Right cardiac atrium (tissue), 5 donors: ENCODE measurements at regions of chr6 and their contacts with region 1.

Region 1: GRCh38 chr6:101393251-101393828 is at the start of gene GRIK2:
- DNase-seq: peak; percentile 39 to 77 (median 72)
- ATAC-seq: peak; percentile 78 to 86
- H3K4me3 ChIP-seq: peak within 1 kb of the TSS; percentile 62
- H3K27ac ChIP-seq: no peak within 1 kb of the TSS
- H3K4me1 ChIP-seq: peaks cover 3% of the 10 kb centered on the region
- H3K27me3 ChIP-seq: no peaks in the 10 kb centered on the region
- total RNA-seq, gene GRIK2: 10.4 to 26.7 (median 16.2) TPM

Region 2: DNA sequence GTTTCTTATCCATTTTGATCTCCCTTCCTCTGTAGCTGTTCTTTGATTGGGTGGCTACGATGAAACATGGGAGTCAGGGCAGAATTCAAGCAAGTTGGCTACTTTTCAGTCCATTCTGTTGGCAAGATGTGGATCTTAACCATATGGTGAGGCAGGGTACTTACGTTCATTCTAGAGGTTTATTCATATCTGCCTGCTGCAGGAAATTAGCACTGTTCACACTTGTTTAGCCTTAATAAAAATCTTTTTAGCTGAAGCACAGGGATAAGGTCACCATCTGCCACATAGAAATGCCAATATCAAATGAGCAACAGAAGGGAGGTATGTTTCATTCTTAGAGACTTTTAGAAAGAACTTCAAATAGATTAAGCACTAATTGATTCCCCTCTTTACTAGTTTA is 84.1 kb after region 1 on chr6:
- intact Hi-C with region 1: no loop called
- DNase-seq: no peak
- ATAC-seq: no peak
- H3K4me3 ChIP-seq: no peak overlapping the region
- H3K27ac ChIP-seq: no peak overlapping the region
- H3K4me1 ChIP-seq: no peaks in the 10 kb centered on the region
- H3K27me3 ChIP-seq: no peaks in the 10 kb centered on the region

Region 3: DNA sequence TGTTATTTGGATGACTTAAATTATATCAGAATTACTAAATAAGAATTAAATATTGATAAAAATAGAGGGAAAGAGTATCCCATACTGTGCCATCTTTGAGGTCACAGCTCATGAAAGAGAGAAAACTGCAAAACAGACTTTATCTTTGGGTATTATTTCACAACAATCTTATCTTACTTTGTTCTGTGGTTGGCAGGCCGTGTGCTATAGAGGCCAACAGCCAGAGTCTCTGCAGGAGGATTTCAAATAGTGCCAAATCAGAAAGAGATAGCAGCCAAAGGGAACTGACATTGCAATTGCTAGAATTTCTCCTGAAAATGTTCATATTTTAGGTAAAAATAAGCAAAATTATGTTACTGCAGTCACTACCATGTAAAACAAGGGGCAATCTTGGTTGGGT is 354.4 kb after region 1 on chr6:
- intact Hi-C with region 1: loop called in 1 of 4 experiments (anchors 10 kb)
- DNase-seq: peak in 2 of 3 donors; percentile 46 to 66
- ATAC-seq: peak; percentile 44 to 84
- H3K4me3 ChIP-seq: no peak overlapping the region
- H3K27ac ChIP-seq: no peak overlapping the region
- H3K4me1 ChIP-seq: no peaks in the 10 kb centered on the region
- H3K27me3 ChIP-seq: no peaks in the 10 kb centered on the region